ENCODE measurements at regions of chr1 and their contacts with region 1.

Region 1: DNA sequence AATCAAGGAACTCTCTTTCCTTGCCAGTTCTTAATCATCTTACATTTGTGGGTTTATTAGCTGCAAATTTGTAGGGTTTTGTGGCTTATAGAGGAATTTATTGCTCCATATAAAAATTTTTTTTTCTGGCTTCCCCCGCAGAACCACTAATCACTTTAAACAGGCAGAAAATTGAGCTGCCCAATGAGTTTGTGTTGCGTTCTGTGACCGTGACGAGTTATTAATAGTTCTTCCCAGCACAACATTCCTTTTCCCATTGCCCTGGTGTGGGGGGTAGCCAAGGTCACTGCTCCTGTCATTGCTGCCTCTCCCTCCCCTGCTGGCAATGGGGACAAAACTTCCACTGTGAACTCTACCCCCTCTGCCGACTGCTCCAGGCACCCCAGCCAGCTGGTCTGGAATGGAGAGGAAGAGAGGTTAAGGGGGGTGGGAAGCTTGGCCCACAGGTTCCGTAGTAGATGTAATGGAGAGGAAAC is 55.1 kb downstream of the UBE2T start:
- DNase-seq: peak; percentile 79 to 88
- ATAC-seq: peak; percentile 74
- H3K4me3 ChIP-seq: no peak overlapping the region
- H3K27ac ChIP-seq: peak overlapping the region; percentile 52 to 80
- H3K4me1 ChIP-seq: peaks cover 9% of the 10 kb centered on the region in 2 donors
- H3K27me3 ChIP-seq: no peaks in the 10 kb centered on the region

Region 2: DNA sequence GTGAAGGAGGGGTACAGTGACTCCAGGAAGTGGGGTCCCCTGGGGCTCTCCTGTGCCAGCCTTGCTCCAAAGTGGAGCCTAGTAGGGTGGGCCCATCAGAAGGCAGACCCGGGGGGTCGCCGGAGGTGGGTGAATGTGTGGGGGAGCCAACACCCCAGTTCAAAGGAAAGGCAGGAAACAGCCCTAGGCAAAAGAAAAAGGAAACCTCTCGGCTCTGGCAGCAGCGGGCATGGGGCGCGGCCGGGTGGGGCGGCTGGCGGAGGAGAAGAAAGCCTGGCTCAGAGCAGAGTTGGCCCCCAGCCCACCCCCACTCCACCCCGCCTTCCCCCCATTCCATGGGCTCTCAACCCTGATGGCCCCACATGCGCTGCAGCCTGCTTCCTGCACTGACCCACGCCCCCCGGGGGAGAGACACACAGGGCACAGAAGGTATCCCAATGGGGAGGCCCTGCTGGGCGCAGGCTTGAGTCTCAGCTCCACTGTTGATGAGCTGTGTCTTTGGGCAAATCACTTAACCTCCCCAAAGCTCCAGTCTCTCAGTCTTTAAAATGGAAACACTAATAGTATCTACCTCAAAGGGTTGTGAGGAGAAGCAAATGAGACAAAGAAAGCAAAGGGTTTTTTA is 87.3 kb before region 1 on chr1:
- intact Hi-C with region 1: loop called in 1 of 2 experiments (anchors 2 kb)
- DNase-seq: no peak
- ATAC-seq: peak; percentile 24
- H3K4me3 ChIP-seq: no peak overlapping the region
- H3K27ac ChIP-seq: peak overlapping the region; percentile 85 to 92
- H3K4me1 ChIP-seq: peaks cover 4% of the 10 kb centered on the region in 2 donors
- H3K27me3 ChIP-seq: no peaks in the 10 kb centered on the region

Region 3: GRCh38 chr1:202241376-202242079 is 45.1 kb before region 1 on chr1:
- intact Hi-C with region 1: loop called (anchors 5 to 10 kb)
- DNase-seq: peak; percentile 82 to 88
- ATAC-seq: peak; percentile 80
- H3K4me3 ChIP-seq: no peak overlapping the region
- H3K27ac ChIP-seq: peak overlapping the region; percentile 34 to 46
- H3K4me1 ChIP-seq: peaks cover 0 to 4% of the 10 kb centered on the region in 2 donors
- H3K27me3 ChIP-seq: no peaks in the 10 kb centered on the region

Measured in aorta (tissue), 5 donors.